CD4-positive, alpha-beta T cell (primary cell): ENCODE measurements at regions of chr18 and their contacts with region 1.

Region 1: GRCh38 chr18:13611601-13612195 is 114.7 kb downstream of the FAM210A start:
- DNase-seq: peak in 1 of 14 experiments; percentile 12
- ATAC-seq: no peak
- H3K4me3 ChIP-seq: peak overlapping the region; percentile 51
- H3K4me3 Mint-ChIP-seq: peak overlapping the region; percentile 86
- H3K27ac ChIP-seq: peak overlapping the region; percentile 13 to 38
- H3K27ac Mint-ChIP-seq: peak overlapping the region; percentile 90
- H3K4me1 ChIP-seq: peaks cover 82% of the 10 kb centered on the region
- H3K4me1 Mint-ChIP-seq: peaks cover 85% of the 10 kb centered on the region
- H3K27me3 ChIP-seq: no peaks in the 10 kb centered on the region
- H3K27me3 Mint-ChIP-seq: no peaks in the 10 kb centered on the region
- CTCF ChIP-seq: no peak

Region 2: GRCh38 chr18:13464432-13465123 is 147.1 kb before region 1 on chr18:
- CTCF ChIA-PET with region 1: no interaction called
- POLR2A ChIA-PET with region 1: interaction called, 3 read pairs
- intact Hi-C with region 1: loop called in 1 of 2 experiments (anchors 10 kb)
- DNase-seq: peak; percentile 36 to 86 (median 68)
- ATAC-seq: peak; percentile 95
- H3K4me3 ChIP-seq: peak overlapping the region; percentile 63
- H3K4me3 Mint-ChIP-seq: peak overlapping the region; percentile 91
- H3K27ac ChIP-seq: peak overlapping the region; percentile 60 to 64
- H3K27ac Mint-ChIP-seq: peak overlapping the region; percentile 97
- H3K4me1 ChIP-seq: peaks cover 50% of the 10 kb centered on the region
- H3K4me1 Mint-ChIP-seq: peaks cover 86% of the 10 kb centered on the region
- H3K27me3 ChIP-seq: no peaks in the 10 kb centered on the region
- H3K27me3 Mint-ChIP-seq: no peaks in the 10 kb centered on the region
- CTCF ChIP-seq: peak; percentile 19

Region 3: GRCh38 chr18:13539050-13539449 is 72.6 kb before region 1 on chr18:
- CTCF ChIA-PET with region 1: no interaction called
- POLR2A ChIA-PET with region 1: no interaction called
- intact Hi-C with region 1: loop called in 1 of 2 experiments (anchors 5 kb)
- DNase-seq: peak in 11 of 14 experiments; percentile 14 to 71 (median 44)
- ATAC-seq: peak; percentile 93
- H3K4me3 ChIP-seq: no peak overlapping the region
- H3K4me3 Mint-ChIP-seq: peak overlapping the region; percentile 83
- H3K27ac ChIP-seq: peak overlapping the region in 1 of 2 donors; percentile 12
- H3K27ac Mint-ChIP-seq: peak overlapping the region; percentile 89
- H3K4me1 ChIP-seq: peaks cover 27% of the 10 kb centered on the region
- H3K4me1 Mint-ChIP-seq: peaks cover 81% of the 10 kb centered on the region
- H3K27me3 ChIP-seq: no peaks in the 10 kb centered on the region
- H3K27me3 Mint-ChIP-seq: no peaks in the 10 kb centered on the region
- CTCF ChIP-seq: no peak

Region 4: DNA sequence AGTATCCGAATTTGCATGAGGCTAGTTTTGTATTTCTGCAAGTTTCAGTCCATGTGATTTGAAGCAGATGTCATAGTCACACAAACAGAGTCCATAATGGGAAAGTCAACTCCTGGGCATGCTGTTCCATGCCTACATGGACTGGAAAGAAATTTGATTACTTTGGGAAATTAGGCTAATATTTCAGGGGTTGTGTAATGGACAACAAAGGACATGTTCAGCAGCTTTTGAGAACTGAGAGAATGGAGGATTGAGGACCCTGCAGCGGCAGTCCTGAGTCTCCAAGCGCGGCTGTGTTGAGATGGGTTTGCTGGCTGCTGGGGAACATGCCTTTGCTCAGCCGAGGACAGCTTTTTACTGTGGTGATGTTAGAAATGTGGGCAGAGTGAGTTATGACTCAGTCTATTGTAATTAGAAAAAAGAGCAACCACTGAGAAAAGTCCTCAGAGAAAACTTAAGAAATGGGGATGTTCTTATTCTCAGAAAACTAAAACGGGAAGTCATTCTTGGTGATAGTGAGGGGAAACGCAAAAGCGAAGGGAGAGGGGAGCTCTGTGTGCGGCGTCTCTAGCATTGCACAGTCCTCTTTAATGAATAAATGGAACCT is 34.5 kb before region 1 on chr18:
- CTCF ChIA-PET with region 1: interaction called, 3 read pairs
- POLR2A ChIA-PET with region 1: interaction called, 3 read pairs
- intact Hi-C with region 1: loop called in 1 of 2 experiments (anchors 5 kb)
- DNase-seq: peak in 4 of 14 experiments; percentile 19 to 54 (median 46)
- ATAC-seq: peak; percentile 58
- H3K4me3 ChIP-seq: peak overlapping the region; percentile 1
- H3K4me3 Mint-ChIP-seq: peak overlapping the region; percentile 79
- H3K27ac ChIP-seq: no peak overlapping the region
- H3K27ac Mint-ChIP-seq: peak overlapping the region; percentile 48
- H3K4me1 ChIP-seq: peaks cover 37% of the 10 kb centered on the region
- H3K4me1 Mint-ChIP-seq: peaks cover 48% of the 10 kb centered on the region
- H3K27me3 ChIP-seq: no peaks in the 10 kb centered on the region
- H3K27me3 Mint-ChIP-seq: no peaks in the 10 kb centered on the region
- CTCF ChIP-seq: no peak